B cell (primary cell): ENCODE measurements at regions of chr20 and their contacts with region 1.

Region 1: GRCh38 chr20:44885392-44886265 is at the start of gene YWHAB:
- DNase-seq: peak; percentile 97
- ATAC-seq: peak; percentile 98
- H3K4me3 ChIP-seq: peak within 1 kb of the TSS; percentile 71 to 93 (median 90)
- H3K4me3 Mint-ChIP-seq: peak within 1 kb of the TSS; percentile 95
- H3K27ac ChIP-seq: peak within 1 kb of the TSS; percentile 87 to 90
- H3K27ac Mint-ChIP-seq: peak within 1 kb of the TSS; percentile 94
- H3K4me1 ChIP-seq: peaks cover 42 to 48% of the 10 kb centered on the region in 2 donors
- H3K4me1 Mint-ChIP-seq: peaks cover 59% of the 10 kb centered on the region
- H3K27me3 ChIP-seq: no peaks in the 10 kb centered on the region
- H3K27me3 Mint-ChIP-seq: no peaks in the 10 kb centered on the region
- CTCF ChIP-seq: no peak
- total RNA-seq, gene YWHAB: 200 and 205 TPM in 2 replicates

Region 2: DNA sequence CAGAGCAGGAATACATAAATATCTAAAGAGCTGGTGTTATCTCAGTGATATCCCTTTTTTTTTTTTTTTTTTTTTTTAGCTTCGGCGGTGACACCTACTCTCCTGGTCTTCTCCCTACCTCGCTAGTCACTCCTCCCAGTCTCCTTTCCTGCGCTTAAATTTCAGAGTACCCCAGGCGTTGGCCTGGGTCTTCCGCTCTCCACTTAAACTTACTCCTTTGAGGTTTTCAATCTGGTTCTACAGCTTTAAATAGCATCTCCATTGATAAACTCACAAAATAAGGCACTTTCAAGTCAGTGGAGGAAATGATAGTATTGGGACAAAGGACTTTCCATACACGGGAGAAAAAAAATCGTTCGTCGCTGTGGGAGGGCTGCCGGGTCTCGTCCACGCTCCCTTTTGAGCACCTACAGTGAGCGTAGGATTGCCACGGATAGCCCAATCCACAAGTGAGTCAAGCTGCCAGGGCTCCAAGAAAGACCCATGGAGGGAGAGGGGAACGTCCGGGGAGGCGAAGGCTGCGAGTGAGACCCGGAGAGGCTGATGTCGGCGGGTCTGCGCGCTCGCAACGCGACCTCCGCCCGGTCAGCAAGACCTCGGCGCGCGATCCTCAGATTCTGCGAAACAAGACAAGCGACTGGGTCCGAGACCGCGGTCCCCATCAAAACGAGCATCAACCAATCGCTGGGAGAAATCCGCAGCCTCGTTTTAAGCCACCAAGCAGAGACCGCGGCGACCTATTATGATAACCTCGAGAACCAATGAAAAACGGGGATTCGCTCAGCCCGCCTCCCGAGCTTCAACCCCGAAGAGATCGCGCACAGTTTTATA is 1428.6 kb before region 1 on chr20:
- CTCF ChIA-PET with region 1: no interaction called
- POLR2A ChIA-PET with region 1: interaction called, 3 read pairs
- intact Hi-C with region 1: loop called (anchors 5 kb)
- DNase-seq: peak; percentile 94
- ATAC-seq: peak; percentile 78
- H3K4me3 ChIP-seq: peak overlapping the region; percentile 84 to 98 (median 95)
- H3K4me3 Mint-ChIP-seq: peak overlapping the region; percentile 89
- H3K27ac ChIP-seq: peak overlapping the region; percentile 99 to 100
- H3K27ac Mint-ChIP-seq: peak overlapping the region; percentile 96
- H3K4me1 ChIP-seq: peaks cover 11 to 13% of the 10 kb centered on the region in 2 donors
- H3K4me1 Mint-ChIP-seq: peaks cover 27% of the 10 kb centered on the region
- H3K27me3 ChIP-seq: no peaks in the 10 kb centered on the region
- H3K27me3 Mint-ChIP-seq: peaks cover 12% of the 10 kb centered on the region
- CTCF ChIP-seq: no peak

Region 3: GRCh38 chr20:44310664-44311639 is 574.7 kb before region 1 on chr20 and contains the start of gene FITM2:
- CTCF ChIA-PET with region 1: interaction called, 3 read pairs
- POLR2A ChIA-PET with region 1: no interaction called
- intact Hi-C with region 1: loop called (anchors 5 kb)
- DNase-seq: peak; percentile 98
- ATAC-seq: peak; percentile 97
- H3K4me3 ChIP-seq: peak within 1 kb of the TSS; percentile 62 to 96 (median 95)
- H3K4me3 Mint-ChIP-seq: peak within 1 kb of the TSS; percentile 95
- H3K27ac ChIP-seq: peak within 1 kb of the TSS in 1 of 2 donors; percentile 22
- H3K27ac Mint-ChIP-seq: peak within 1 kb of the TSS; percentile 96
- H3K4me1 ChIP-seq: peaks cover 10 to 16% of the 10 kb centered on the region in 2 donors
- H3K4me1 Mint-ChIP-seq: peaks cover 22% of the 10 kb centered on the region
- H3K27me3 ChIP-seq: no peaks in the 10 kb centered on the region
- H3K27me3 Mint-ChIP-seq: peaks cover 5% of the 10 kb centered on the region
- CTCF ChIP-seq: peak; percentile 97
- total RNA-seq, gene FITM2: 4.0 and 4.3 TPM in 2 replicates

Region 4: DNA sequence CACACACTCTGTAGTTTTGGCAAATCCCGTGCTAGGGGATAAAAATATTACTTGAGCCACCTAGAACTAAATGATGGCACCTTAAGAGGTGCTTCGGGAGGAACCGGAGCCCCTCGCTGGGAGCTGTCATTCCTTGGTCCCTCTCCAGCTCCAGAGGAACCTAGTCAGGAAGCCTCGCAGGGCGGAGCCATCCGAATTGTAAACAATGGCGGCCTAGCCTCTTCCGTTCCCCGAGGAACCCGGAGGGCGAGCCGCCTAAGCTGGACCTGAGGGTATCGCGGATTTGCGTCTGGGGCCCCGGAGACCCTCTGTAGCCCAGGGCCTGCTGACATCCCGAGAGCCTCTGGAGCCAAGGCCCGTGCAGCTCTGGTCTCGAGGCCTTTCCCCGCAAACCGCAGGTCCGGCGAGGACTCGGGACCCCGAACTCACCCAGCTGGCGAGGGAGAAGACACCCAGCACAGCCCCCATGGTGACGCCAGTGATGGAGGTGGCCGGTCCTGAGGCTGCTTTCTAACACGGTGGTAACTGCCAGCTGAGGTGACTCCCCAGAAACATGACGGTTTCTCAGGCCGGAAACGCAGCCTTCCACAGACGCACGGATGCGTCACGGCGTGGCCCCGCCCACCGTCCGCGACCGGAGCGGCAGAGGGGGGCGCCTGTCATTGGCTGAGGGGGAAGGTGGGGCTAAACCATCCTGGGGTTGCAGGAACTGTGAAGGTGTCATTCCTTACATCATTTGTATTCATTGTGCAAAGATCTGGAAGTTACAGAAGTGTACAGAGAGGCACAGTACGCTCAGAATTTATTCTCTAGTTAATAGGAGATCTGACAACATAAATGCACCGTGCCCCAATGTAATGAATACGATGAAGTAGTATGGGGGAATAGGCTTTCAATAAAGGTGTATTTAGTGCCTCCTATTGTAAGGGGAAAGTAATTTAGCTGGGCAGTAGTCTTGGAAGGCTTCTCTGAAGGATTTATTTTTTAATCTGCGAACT is 363.8 kb before region 1 on chr20 and contains the start of gene SERINC3:
- CTCF ChIA-PET with region 1: no interaction called
- POLR2A ChIA-PET with region 1: no interaction called
- intact Hi-C with region 1: loop called (anchors 1 kb)
- DNase-seq: peak; percentile 98
- ATAC-seq: peak; percentile 99
- H3K4me3 ChIP-seq: peak within 1 kb of the TSS; percentile 89 to 98 (median 95)
- H3K4me3 Mint-ChIP-seq: peak within 1 kb of the TSS; percentile 97
- H3K27ac ChIP-seq: peak within 1 kb of the TSS; percentile 94 to 95
- H3K27ac Mint-ChIP-seq: peak within 1 kb of the TSS; percentile 94
- H3K4me1 ChIP-seq: peaks cover 18 to 25% of the 10 kb centered on the region in 2 donors
- H3K4me1 Mint-ChIP-seq: peaks cover 51% of the 10 kb centered on the region
- H3K27me3 ChIP-seq: no peaks in the 10 kb centered on the region
- H3K27me3 Mint-ChIP-seq: peaks cover 1% of the 10 kb centered on the region
- CTCF ChIP-seq: no peak
- total RNA-seq, gene SERINC3: 51.6 and 56.7 TPM in 2 replicates

Region 5: DNA sequence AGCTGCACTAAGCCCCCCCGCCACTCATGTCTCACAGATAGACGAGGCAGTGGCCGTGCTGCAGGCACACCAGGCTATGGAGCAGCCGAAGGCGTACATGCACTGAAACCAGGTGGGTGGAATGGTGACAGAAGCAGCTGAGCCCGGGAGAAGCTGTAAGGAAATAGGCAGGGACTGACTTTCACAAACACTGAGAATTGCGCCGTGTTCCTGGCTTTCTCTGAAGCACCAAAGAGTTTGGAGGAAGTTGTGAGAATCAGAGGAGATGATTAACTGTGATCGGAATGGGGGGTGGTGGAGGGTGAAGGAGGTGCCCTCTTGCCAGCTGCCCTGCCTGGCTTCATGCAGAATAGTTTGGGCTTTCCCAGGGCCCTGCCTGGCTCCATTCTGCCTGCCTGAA is 53.0 kb after region 1 on chr20:
- CTCF ChIA-PET with region 1: no interaction called
- POLR2A ChIA-PET with region 1: no interaction called
- intact Hi-C with region 1: no loop called
- DNase-seq: no peak
- ATAC-seq: no peak
- H3K4me3 ChIP-seq: no peak overlapping the region
- H3K4me3 Mint-ChIP-seq: no peak overlapping the region
- H3K27ac ChIP-seq: no peak overlapping the region
- H3K27ac Mint-ChIP-seq: no peak overlapping the region
- H3K4me1 ChIP-seq: no peaks in the 10 kb centered on the region
- H3K4me1 Mint-ChIP-seq: no peaks in the 10 kb centered on the region
- H3K27me3 ChIP-seq: no peaks in the 10 kb centered on the region
- H3K27me3 Mint-ChIP-seq: no peaks in the 10 kb centered on the region
- CTCF ChIP-seq: no peak

Region 6: GRCh38 chr20:44966030-44966961 is 80.7 kb after region 1 on chr20 and contains the start of gene STK4:
- CTCF ChIA-PET with region 1: no interaction called
- POLR2A ChIA-PET with region 1: interaction called, 3 read pairs
- intact Hi-C with region 1: loop called (anchors 1 kb)
- DNase-seq: peak; percentile 98
- ATAC-seq: peak; percentile 86
- H3K4me3 ChIP-seq: peak within 1 kb of the TSS; percentile 86 to 99 (median 90)
- H3K4me3 Mint-ChIP-seq: peak within 1 kb of the TSS; percentile 94
- H3K27ac ChIP-seq: peak within 1 kb of the TSS; percentile 91
- H3K27ac Mint-ChIP-seq: peak within 1 kb of the TSS; percentile 98
- H3K4me1 ChIP-seq: peaks cover 47 to 59% of the 10 kb centered on the region in 2 donors
- H3K4me1 Mint-ChIP-seq: peaks cover 54% of the 10 kb centered on the region
- H3K27me3 ChIP-seq: no peaks in the 10 kb centered on the region
- H3K27me3 Mint-ChIP-seq: no peaks in the 10 kb centered on the region
- CTCF ChIP-seq: peak; percentile 68
- total RNA-seq, gene STK4: 323 and 324 TPM in 2 replicates

Region 7: DNA sequence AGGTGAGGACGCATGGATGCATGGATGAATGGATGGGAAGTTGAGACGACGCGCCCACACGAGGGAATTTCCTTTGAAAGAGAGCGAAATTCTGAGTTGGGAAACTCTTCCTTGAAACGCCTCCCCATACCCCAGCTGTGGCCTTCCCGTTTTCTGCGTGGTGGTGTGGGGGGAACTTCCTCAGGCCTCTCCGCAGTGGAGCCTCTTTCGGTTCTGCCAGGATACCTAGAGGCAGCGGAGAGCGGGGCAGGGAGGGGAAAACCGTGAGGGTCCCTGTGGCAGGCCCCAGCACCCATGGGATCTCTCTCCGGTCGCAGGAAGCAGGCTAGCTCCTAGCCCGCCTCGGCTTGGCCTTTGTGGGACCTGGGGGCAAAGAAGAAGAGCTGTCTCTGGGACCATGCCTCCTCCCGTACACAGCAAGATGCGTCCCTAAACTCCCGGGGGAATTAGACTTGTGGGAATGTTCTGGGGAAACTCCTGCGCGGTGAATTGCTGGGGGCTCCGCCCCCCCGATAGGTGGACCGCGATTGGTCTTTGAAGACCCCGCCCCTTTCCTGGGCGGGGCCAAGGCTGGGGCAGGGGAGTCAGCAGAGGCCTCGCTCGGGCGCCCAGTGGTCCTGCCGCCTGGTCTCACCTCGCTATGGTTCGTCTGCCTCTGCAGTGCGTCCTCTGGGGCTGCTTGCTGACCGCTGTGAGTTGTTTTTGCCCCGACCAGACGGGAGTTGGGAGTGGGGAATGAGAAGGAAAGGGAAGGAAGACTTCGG is 1232.3 kb after region 1 on chr20 and contains the start of gene CD40:
- CTCF ChIA-PET with region 1: no interaction called
- POLR2A ChIA-PET with region 1: no interaction called
- intact Hi-C with region 1: loop called (anchors 10 kb)
- DNase-seq: peak; percentile 94
- ATAC-seq: peak; percentile 77
- H3K4me3 ChIP-seq: peak within 1 kb of the TSS; percentile 65 to 93 (median 83)
- H3K4me3 Mint-ChIP-seq: peak within 1 kb of the TSS; percentile 100
- H3K27ac ChIP-seq: peak within 1 kb of the TSS; percentile 99 to 100
- H3K27ac Mint-ChIP-seq: peak within 1 kb of the TSS; percentile 100
- H3K4me1 ChIP-seq: peaks cover 35 to 49% of the 10 kb centered on the region in 2 donors
- H3K4me1 Mint-ChIP-seq: peaks cover 54% of the 10 kb centered on the region
- H3K27me3 ChIP-seq: no peaks in the 10 kb centered on the region
- H3K27me3 Mint-ChIP-seq: no peaks in the 10 kb centered on the region
- CTCF ChIP-seq: no peak
- total RNA-seq, gene CD40: 206 and 210 TPM in 2 replicates